CD4-positive, alpha-beta T cell (primary cell): ENCODE measurements at regions of chr17 and their contacts with region 1.

Region 1: GRCh38 chr17:78745407-78746088 is 36.5 kb downstream of the CYTH1 start:
- DNase-seq: peak in 9 of 14 experiments; percentile 37 to 83 (median 48)
- ATAC-seq: no peak
- H3K4me3 ChIP-seq: no peak overlapping the region
- H3K4me3 Mint-ChIP-seq: peak overlapping the region; percentile 78
- H3K27ac ChIP-seq: peak overlapping the region; percentile 81 to 84
- H3K27ac Mint-ChIP-seq: peak overlapping the region; percentile 85
- H3K4me1 ChIP-seq: peaks cover 89% of the 10 kb centered on the region
- H3K4me1 Mint-ChIP-seq: peaks cover 94% of the 10 kb centered on the region
- H3K27me3 ChIP-seq: no peaks in the 10 kb centered on the region
- H3K27me3 Mint-ChIP-seq: no peaks in the 10 kb centered on the region
- CTCF ChIP-seq: peak; percentile 86

Region 2: GRCh38 chr17:78697554-78698343 is 47.8 kb before region 1 on chr17:
- CTCF ChIA-PET with region 1: no interaction called
- POLR2A ChIA-PET with region 1: no interaction called
- intact Hi-C with region 1: no loop called
- DNase-seq: no peak
- ATAC-seq: peak; percentile 30
- H3K4me3 ChIP-seq: no peak overlapping the region
- H3K4me3 Mint-ChIP-seq: peak overlapping the region; percentile 65
- H3K27ac ChIP-seq: no peak overlapping the region
- H3K27ac Mint-ChIP-seq: peak overlapping the region; percentile 69
- H3K4me1 ChIP-seq: no peaks in the 10 kb centered on the region
- H3K4me1 Mint-ChIP-seq: peaks cover 26% of the 10 kb centered on the region
- H3K27me3 ChIP-seq: no peaks in the 10 kb centered on the region
- H3K27me3 Mint-ChIP-seq: no peaks in the 10 kb centered on the region
- CTCF ChIP-seq: no peak

Region 3: GRCh38 chr17:78708510-78708973 is 37.0 kb before region 1 on chr17:
- CTCF ChIA-PET with region 1: interaction called, 5 read pairs
- POLR2A ChIA-PET with region 1: interaction called, 8 read pairs
- intact Hi-C with region 1: loop called in 1 of 2 experiments (anchors 2 kb)
- DNase-seq: peak; percentile 42 to 81 (median 54)
- ATAC-seq: peak; percentile 81
- H3K4me3 ChIP-seq: no peak overlapping the region
- H3K4me3 Mint-ChIP-seq: peak overlapping the region; percentile 79
- H3K27ac ChIP-seq: peak overlapping the region; percentile 11 to 39
- H3K27ac Mint-ChIP-seq: peak overlapping the region; percentile 78
- H3K4me1 ChIP-seq: peaks cover 51% of the 10 kb centered on the region
- H3K4me1 Mint-ChIP-seq: peaks cover 67% of the 10 kb centered on the region
- H3K27me3 ChIP-seq: no peaks in the 10 kb centered on the region
- H3K27me3 Mint-ChIP-seq: no peaks in the 10 kb centered on the region
- CTCF ChIP-seq: peak; percentile 87

Region 4: GRCh38 chr17:78769196-78769773 is 23.7 kb after region 1 on chr17:
- CTCF ChIA-PET with region 1: interaction called, 4 read pairs
- POLR2A ChIA-PET with region 1: interaction called, 92 read pairs
- intact Hi-C with region 1: loop called in 1 of 2 experiments (anchors 2 kb)
- DNase-seq: peak in 3 of 14 experiments; percentile 33 to 66 (median 63)
- ATAC-seq: peak; percentile 42
- H3K4me3 ChIP-seq: peak overlapping the region; percentile 12
- H3K4me3 Mint-ChIP-seq: no peak overlapping the region
- H3K27ac ChIP-seq: peak overlapping the region; percentile 34 to 38
- H3K27ac Mint-ChIP-seq: no peak overlapping the region
- H3K4me1 ChIP-seq: peaks cover 92% of the 10 kb centered on the region
- H3K4me1 Mint-ChIP-seq: peaks cover 28% of the 10 kb centered on the region
- H3K27me3 ChIP-seq: no peaks in the 10 kb centered on the region
- H3K27me3 Mint-ChIP-seq: no peaks in the 10 kb centered on the region
- CTCF ChIP-seq: peak; percentile 17

Region 5: DNA sequence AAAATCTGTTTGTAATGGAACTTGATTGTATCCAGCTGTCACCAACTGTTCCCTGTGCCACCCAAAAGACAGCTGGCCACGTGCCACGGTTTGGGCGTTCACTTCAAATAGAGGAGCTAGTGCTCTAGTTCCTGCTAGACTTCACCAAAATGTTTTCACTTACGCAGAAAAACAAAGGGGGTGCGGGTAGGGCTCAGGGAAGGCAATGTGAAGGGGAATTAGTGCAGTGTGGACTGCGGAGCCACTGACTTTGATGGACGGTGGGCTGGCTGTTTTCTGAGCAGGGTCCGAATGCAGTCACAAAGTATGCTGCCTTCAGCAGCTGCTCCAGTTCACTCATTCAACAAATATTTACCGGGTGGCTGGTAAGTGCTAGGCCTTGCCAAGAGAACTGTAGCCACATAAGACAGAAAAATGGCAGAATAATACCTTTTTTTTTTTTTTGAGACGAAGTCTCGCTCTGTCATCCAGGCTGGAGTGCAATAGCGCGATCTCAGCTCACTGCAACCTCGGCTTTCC is 44.2 kb after region 1 on chr17:
- CTCF ChIA-PET with region 1: interaction called, 4 read pairs
- POLR2A ChIA-PET with region 1: interaction called, 30 read pairs
- intact Hi-C with region 1: no loop called
- DNase-seq: peak; percentile 42 to 85 (median 74)
- ATAC-seq: peak; percentile 82
- H3K4me3 ChIP-seq: peak overlapping the region; percentile 19
- H3K4me3 Mint-ChIP-seq: peak overlapping the region; percentile 75
- H3K27ac ChIP-seq: peak overlapping the region; percentile 51 to 73
- H3K27ac Mint-ChIP-seq: peak overlapping the region; percentile 97
- H3K4me1 ChIP-seq: peaks cover 87% of the 10 kb centered on the region
- H3K4me1 Mint-ChIP-seq: peaks cover 80% of the 10 kb centered on the region
- H3K27me3 ChIP-seq: no peaks in the 10 kb centered on the region
- H3K27me3 Mint-ChIP-seq: no peaks in the 10 kb centered on the region
- CTCF ChIP-seq: no peak

Region 6: DNA sequence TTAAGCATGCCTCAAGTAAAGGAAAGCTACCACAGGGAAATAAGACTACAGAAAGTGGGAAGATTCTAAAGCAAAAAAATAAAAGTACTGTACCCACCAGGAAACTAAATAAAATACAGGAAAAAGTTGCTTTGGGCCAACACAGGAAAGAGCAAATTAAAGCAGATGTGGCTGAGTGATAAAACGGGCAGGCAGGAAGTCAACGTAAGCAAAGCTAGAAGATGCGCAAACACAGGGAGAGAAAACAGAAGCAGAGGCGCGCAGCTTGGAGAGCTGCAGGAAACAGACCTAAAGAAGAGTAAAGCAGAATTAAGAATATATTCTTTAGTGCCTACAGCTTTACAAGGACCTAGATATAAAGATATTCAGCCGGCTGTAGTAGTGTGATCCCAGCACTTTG is 73.4 kb after region 1 on chr17:
- CTCF ChIA-PET with region 1: no interaction called
- POLR2A ChIA-PET with region 1: interaction called, 14 read pairs
- intact Hi-C with region 1: loop called in 1 of 2 experiments (anchors 5 kb)
- DNase-seq: peak in 13 of 14 experiments; percentile 40 to 88 (median 62)
- ATAC-seq: peak; percentile 59
- H3K4me3 ChIP-seq: peak overlapping the region; percentile 3
- H3K4me3 Mint-ChIP-seq: peak overlapping the region; percentile 71
- H3K27ac ChIP-seq: peak overlapping the region; percentile 76 to 79
- H3K27ac Mint-ChIP-seq: peak overlapping the region; percentile 91
- H3K4me1 ChIP-seq: peaks cover 59% of the 10 kb centered on the region
- H3K4me1 Mint-ChIP-seq: peaks cover 66% of the 10 kb centered on the region
- H3K27me3 ChIP-seq: no peaks in the 10 kb centered on the region
- H3K27me3 Mint-ChIP-seq: no peaks in the 10 kb centered on the region
- CTCF ChIP-seq: no peak

Region 7: GRCh38 chr17:78993241-78993956 is 247.9 kb after region 1 on chr17:
- CTCF ChIA-PET with region 1: no interaction called
- POLR2A ChIA-PET with region 1: no interaction called
- intact Hi-C with region 1: no loop called
- DNase-seq: peak in 13 of 14 experiments; percentile 26 to 73 (median 43)
- ATAC-seq: peak; percentile 78
- H3K4me3 ChIP-seq: no peak overlapping the region
- H3K4me3 Mint-ChIP-seq: no peak overlapping the region
- H3K27ac ChIP-seq: no peak overlapping the region
- H3K27ac Mint-ChIP-seq: no peak overlapping the region
- H3K4me1 ChIP-seq: peaks cover 7% of the 10 kb centered on the region
- H3K4me1 Mint-ChIP-seq: peaks cover 8% of the 10 kb centered on the region
- H3K27me3 ChIP-seq: no peaks in the 10 kb centered on the region
- H3K27me3 Mint-ChIP-seq: no peaks in the 10 kb centered on the region
- CTCF ChIP-seq: peak; percentile 76

Region 8: GRCh38 chr17:79728226-79728907 is 982.8 kb after region 1 on chr17:
- CTCF ChIA-PET with region 1: no interaction called
- POLR2A ChIA-PET with region 1: no interaction called
- intact Hi-C with region 1: no loop called
- DNase-seq: peak; percentile 70 to 94 (median 77)
- ATAC-seq: peak; percentile 95
- H3K4me3 ChIP-seq: peak overlapping the region; percentile 19
- H3K4me3 Mint-ChIP-seq: peak overlapping the region; percentile 69
- H3K27ac ChIP-seq: no peak overlapping the region
- H3K27ac Mint-ChIP-seq: peak overlapping the region; percentile 81
- H3K4me1 ChIP-seq: peaks cover 29% of the 10 kb centered on the region
- H3K4me1 Mint-ChIP-seq: peaks cover 15% of the 10 kb centered on the region
- H3K27me3 ChIP-seq: no peaks in the 10 kb centered on the region
- H3K27me3 Mint-ChIP-seq: no peaks in the 10 kb centered on the region
- CTCF ChIP-seq: no peak